ENCODE measurements at regions of chr15 and their contacts with region 1.

Region 1: GRCh38 chr15:45573961-45574629 is 13.1 kb upstream of the BLOC1S6 start:
- DNase-seq: no peak
- ATAC-seq: no peak
- H3K4me3 ChIP-seq: no peak overlapping the region
- H3K27ac ChIP-seq: no peak overlapping the region
- H3K4me1 ChIP-seq: peaks cover 0 to 11% (median 0%) of the 10 kb centered on the region in 9 donors
- H3K27me3 ChIP-seq: peaks cover 0 to 12% (median 0%) of the 10 kb centered on the region in 7 donors
- CTCF ChIP-seq: peak in 4 of 9 donors; percentile 6 to 26 (median 8)

Region 2: DNA sequence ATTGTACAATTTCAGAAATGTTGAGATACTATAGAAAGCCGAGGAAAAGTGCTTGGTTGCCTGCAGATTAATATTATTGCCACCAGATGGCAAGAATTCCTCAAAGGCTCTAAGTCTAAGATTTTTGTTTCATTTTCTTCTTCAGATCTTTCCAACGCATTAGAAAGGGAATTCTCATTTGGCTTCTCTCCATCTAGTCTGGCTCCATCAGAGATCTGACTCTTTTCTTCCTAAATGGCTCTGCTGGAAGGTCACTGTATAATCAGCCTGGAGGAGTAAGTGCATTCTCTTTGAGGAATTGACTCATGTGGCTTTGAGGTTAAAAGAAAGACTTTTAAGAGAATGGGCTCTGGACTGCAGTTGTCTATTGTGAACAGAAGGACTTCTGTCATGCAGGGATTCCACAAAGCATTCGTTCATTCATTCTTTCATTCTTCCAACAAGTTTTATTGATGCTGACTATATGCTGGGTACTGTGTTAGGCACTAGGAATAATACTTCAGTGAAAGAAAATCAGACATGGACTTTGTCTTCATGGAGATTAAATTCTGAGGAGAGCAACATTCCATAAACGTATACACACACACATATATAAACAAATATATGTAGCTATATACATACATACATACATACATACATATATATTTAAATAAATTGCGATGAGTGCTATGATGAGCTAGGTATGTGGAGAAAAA is 266.7 kb before region 1 on chr15:
- intact Hi-C with region 1: no loop called
- DNase-seq: peak in 1 of 2 donors; percentile 16
- ATAC-seq: peak in 7 of 8 donors; percentile 42 to 72 (median 59)
- H3K4me3 ChIP-seq: peak overlapping the region in 6 of 10 donors; percentile 16 to 36 (median 22)
- H3K27ac ChIP-seq: peak overlapping the region in 3 of 10 donors; percentile 2 to 36 (median 16)
- H3K4me1 ChIP-seq: peaks cover 0 to 12% (median 0%) of the 10 kb centered on the region in 9 donors
- H3K27me3 ChIP-seq: peaks cover 0 to 12% (median 3%) of the 10 kb centered on the region in 7 donors
- CTCF ChIP-seq: peak in 8 of 9 donors; percentile 36 to 76 (median 64)

Region 3: DNA sequence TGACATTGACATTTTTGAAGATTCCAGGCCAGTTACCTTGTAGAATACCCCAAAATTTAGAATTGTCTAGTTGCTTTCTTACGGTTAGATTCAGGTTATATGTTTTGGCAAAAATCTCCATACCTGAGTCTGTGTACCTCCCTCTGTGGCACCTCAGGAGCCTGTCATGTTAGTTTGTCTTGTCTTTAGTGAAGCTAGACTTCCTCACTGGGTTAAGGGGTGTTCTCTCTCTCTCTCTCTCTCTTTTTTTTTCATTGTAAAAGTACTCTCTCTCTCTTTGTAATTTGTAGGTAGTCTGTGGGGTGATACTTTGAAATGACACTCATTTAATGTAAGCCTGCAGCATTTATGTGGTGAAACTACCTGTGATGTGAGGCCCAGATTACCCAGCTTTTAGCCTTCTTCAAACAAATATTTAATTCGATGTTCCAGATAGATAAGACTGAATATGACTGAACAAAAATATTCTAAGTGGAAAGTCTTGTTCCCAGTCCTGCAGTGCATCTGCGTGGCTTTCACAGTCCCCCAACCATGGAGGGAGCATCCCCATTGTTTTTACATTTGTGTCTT is 110.4 kb after region 1 on chr15:
- intact Hi-C with region 1: loop called in 1 of 10 experiments (anchors 5 kb)
- DNase-seq: no peak
- ATAC-seq: no peak
- H3K4me3 ChIP-seq: no peak overlapping the region
- H3K27ac ChIP-seq: no peak overlapping the region
- H3K4me1 ChIP-seq: no peaks in the 10 kb centered on the region
- H3K27me3 ChIP-seq: no peaks in the 10 kb centered on the region
- CTCF ChIP-seq: no peak